ENCODE measurements at regions of chr6 and their contacts with region 1.

Region 1: DNA sequence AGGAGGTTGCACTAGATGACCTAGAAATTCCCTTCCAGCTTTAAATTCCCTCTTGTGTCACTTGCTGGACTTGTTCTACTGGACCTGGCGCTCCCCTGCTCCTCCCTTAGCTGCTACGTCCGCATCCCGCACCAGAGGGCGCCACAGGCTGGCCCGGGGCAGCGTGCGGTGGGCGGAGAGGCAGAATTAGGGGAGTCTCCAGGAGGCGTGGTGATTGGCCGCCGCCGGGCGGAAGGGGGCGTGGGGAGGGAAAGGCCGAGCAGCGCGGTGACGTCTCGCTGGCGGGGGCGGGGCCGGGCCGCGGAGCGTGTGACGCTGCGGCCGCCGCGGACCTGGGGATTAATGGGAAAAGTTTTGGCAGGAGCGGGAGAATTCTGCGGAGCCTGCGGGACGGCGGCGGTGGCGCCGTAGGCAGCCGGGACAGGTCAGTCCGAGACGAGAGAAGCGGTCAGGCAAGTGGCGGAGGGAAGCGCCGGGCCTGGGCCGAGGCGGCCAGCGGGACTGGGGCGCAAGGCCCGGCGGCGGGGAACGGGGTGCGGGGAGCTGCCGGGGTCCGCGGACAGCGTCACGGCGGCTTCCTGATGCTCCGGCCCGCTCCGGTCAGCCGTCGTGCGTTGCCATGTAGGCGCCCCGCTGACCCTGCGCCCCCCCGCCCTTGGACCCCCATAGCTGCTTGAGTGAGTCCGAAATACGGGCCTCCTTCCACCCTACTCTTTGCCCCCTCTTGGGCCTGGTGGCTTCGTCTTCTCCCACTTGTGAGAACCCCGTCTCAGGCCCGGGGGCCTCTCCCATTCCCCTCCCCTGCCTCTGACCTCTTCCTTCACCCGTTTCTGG is at the start of gene PPARD:
- DNase-seq: peak; percentile 99
- ATAC-seq: peak; percentile 98
- H3K4me3 Mint-ChIP-seq: peak within 1 kb of the TSS; percentile 87
- H3K27ac Mint-ChIP-seq: peak within 1 kb of the TSS; percentile 94
- H3K4me1 Mint-ChIP-seq: peaks cover 45% of the 10 kb centered on the region
- H3K27me3 Mint-ChIP-seq: no peaks in the 10 kb centered on the region
- total RNA-seq, gene PPARD: 16.5 to 19.2 TPM

Region 2: GRCh38 chr6:35370124-35370741 is 27.8 kb after region 1 on chr6:
- CTCF ChIA-PET with region 1: interaction called, 6 read pairs
- POLR2A ChIA-PET with region 1: interaction called, 3 read pairs
- intact Hi-C with region 1: loop called in 1 of 2 experiments (anchors 2 kb)
- DNase-seq: peak; percentile 59
- ATAC-seq: peak; percentile 62
- H3K4me3 Mint-ChIP-seq: peak overlapping the region; percentile 41
- H3K27ac Mint-ChIP-seq: peak overlapping the region; percentile 96
- H3K4me1 Mint-ChIP-seq: peaks cover 63% of the 10 kb centered on the region
- H3K27me3 Mint-ChIP-seq: no peaks in the 10 kb centered on the region

Region 3: DNA sequence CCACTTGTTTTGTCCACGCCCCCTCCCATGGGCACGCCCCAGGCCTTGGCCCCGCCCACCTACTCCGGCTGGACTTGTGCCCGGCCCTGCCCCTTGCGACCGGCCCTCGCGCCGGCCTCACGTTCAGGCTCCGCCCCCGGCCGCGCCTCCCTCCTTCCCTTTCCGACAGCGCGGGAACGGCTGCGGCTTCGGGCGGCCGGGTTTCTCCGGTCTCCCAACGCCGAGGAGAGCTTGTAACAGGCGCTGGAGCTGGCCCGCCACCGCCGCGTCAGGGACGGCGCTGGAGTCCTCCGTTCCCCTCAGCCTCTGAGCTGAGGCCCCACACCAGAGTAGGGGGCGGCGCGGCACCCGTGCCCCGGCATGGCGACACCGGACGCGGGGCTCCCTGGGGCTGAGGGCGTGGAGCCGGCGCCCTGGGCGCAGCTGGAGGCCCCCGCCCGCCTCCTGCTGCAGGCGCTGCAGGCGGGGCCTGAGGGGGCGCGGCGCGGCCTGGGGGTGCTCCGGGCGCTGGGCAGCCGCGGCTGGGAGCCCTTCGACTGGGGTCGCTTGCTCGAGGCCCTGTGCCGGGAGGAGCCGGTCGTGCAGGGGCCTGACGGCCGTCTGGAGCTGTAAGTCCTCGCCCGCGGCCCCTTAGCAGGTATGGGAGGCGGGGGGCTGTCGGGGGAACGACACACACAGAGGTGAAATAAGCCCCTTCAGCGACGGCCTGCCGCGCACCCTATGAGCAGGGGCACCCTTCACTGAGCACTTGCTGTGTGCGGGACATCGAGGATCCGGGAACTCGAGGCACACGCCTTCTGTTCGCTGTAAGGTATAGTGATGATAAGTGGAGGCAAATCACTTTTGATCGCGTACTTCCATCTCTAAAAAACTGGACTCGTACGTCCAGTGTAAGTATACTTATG is 110.0 kb after region 1 on chr6 and contains the start of gene FANCE:
- CTCF ChIA-PET with region 1: interaction called, 181 read pairs
- POLR2A ChIA-PET with region 1: interaction called, 6 read pairs
- intact Hi-C with region 1: loop called (anchors 1 kb)
- DNase-seq: peak; percentile 95
- ATAC-seq: peak; percentile 89
- H3K4me3 Mint-ChIP-seq: peak within 1 kb of the TSS; percentile 82
- H3K27ac Mint-ChIP-seq: peak within 1 kb of the TSS; percentile 47
- H3K4me1 Mint-ChIP-seq: peaks cover 30% of the 10 kb centered on the region
- H3K27me3 Mint-ChIP-seq: no peaks in the 10 kb centered on the region
- total RNA-seq, gene FANCE: 14.3 to 14.8 TPM

Region 4: GRCh38 chr6:35496841-35497570 is 154.5 kb after region 1 on chr6 and contains the start of gene TEAD3:
- CTCF ChIA-PET with region 1: no interaction called
- POLR2A ChIA-PET with region 1: no interaction called
- intact Hi-C with region 1: loop called in 1 of 2 experiments (anchors 1 kb)
- DNase-seq: peak; percentile 70
- ATAC-seq: peak; percentile 65
- H3K4me3 Mint-ChIP-seq: peak within 1 kb of the TSS; percentile 69
- H3K27ac Mint-ChIP-seq: peak within 1 kb of the TSS; percentile 28
- H3K4me1 Mint-ChIP-seq: peaks cover 4% of the 10 kb centered on the region
- H3K27me3 Mint-ChIP-seq: peaks cover 7% of the 10 kb centered on the region
- total RNA-seq, gene TEAD3: 1.4 to 1.5 TPM

Region 5: GRCh38 chr6:35737413-35738211 is 395.1 kb after region 1 on chr6:
- CTCF ChIA-PET with region 1: interaction called, 3 read pairs
- POLR2A ChIA-PET with region 1: no interaction called
- intact Hi-C with region 1: loop called in 1 of 2 experiments (anchors 1 kb)
- DNase-seq: no peak
- ATAC-seq: peak; percentile 76
- H3K4me3 Mint-ChIP-seq: peak overlapping the region; percentile 56
- H3K27ac Mint-ChIP-seq: peak overlapping the region; percentile 83
- H3K4me1 Mint-ChIP-seq: peaks cover 47% of the 10 kb centered on the region
- H3K27me3 Mint-ChIP-seq: no peaks in the 10 kb centered on the region

Measured in activated CD4-positive, alpha-beta T cell treated with anti-CD3 and anti-CD28 coated beads for 36 hours (primary cell).